Common myeloid progenitor, CD34-positive (primary cell): ENCODE measurements at regions of chr2 and their contacts with region 1.

Region 1: DNA sequence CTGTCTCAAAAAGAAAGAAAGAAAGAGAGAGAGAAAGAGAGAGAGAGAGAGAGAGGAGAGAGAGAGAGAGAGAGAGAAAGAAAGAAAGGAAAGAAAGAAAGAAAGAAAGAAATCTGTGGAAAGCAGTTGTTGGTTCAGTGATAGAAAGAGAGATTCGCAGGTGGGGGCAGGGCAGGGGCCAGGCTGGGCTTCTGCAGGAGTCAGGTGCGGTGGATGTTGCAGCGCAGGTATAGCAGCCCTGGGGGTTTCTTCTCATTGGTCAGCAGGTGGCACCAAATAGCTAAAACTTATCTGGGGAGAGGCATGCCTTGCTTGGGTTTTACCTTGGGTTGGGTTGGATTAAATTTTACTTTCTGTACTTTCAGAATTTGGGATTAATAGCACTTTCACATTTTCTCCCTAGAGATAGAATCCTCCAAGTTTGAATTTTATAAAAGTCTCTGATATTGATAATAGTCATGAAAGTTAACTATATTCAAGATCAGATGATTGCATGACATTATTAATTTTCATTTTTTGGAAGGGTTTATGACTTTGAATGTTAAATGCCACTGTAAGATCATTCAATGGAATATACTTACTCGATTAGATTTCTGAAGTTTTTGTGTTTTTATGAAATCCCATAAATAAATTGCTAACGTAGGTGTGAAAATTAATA is 66.6 kb downstream of the SPTBN1 start:
- DNase-seq: peak; percentile 76 to 85 (median 84)
- H3K4me3 ChIP-seq: no peak overlapping the region
- H3K27ac ChIP-seq: no peak overlapping the region
- H3K4me1 ChIP-seq: peaks cover 0 to 15% (median 3%) of the 10 kb centered on the region in 4 experiments
- H3K27me3 ChIP-seq: no peaks in the 10 kb centered on the region

Region 2: GRCh38 chr2:54106631-54107454 is 415.9 kb before region 1 on chr2:
- CTCF ChIA-PET with region 1: interaction called, 12 read pairs
- POLR2A ChIA-PET with region 1: no interaction called
- DNase-seq: peak; percentile 69 to 83 (median 78)
- H3K4me3 ChIP-seq: peak overlapping the region in 1 of 7 experiments; percentile 53
- H3K27ac ChIP-seq: no peak overlapping the region
- H3K4me1 ChIP-seq: peaks cover 2 to 9% (median 7%) of the 10 kb centered on the region in 4 experiments
- H3K27me3 ChIP-seq: no peaks in the 10 kb centered on the region

Region 3: GRCh38 chr2:54387059-54387991 is 135.4 kb before region 1 on chr2:
- CTCF ChIA-PET with region 1: no interaction called
- POLR2A ChIA-PET with region 1: no interaction called
- DNase-seq: no peak
- H3K4me3 ChIP-seq: no peak overlapping the region
- H3K27ac ChIP-seq: no peak overlapping the region
- H3K4me1 ChIP-seq: peaks cover 0 to 3% (median 0%) of the 10 kb centered on the region in 4 experiments
- H3K27me3 ChIP-seq: peaks cover 0 to 3% (median 0%) of the 10 kb centered on the region in 5 experiments

Region 4: GRCh38 chr2:54558188-54559005 is 35.6 kb after region 1 on chr2:
- CTCF ChIA-PET with region 1: interaction called, 33 read pairs
- POLR2A ChIA-PET with region 1: no interaction called
- DNase-seq: peak; percentile 81 to 95 (median 92)
- H3K4me3 ChIP-seq: peak overlapping the region; percentile 80 to 100 (median 95)
- H3K27ac ChIP-seq: peak overlapping the region; percentile 81 to 93
- H3K4me1 ChIP-seq: peaks cover 24 to 50% (median 35%) of the 10 kb centered on the region in 4 experiments
- H3K27me3 ChIP-seq: no peaks in the 10 kb centered on the region

Region 5: DNA sequence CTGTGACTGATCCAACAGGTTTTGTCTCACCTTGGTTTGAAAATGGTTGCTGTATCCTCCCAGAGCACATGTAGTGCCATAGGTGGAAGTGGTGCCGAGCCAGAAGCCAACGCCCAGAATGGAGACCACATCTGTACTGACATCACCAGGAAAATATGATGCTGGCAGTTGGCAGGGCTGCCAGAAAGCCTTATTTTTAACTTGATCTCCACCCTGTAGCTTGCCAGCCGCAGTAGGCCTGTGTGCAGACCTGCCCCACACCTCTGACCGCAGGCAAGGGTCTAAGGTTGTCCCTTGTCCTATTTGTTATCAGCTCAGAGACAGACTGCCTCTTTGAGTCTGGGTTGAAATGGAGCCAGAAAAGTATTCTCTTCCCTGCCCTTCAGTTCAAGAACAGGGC is 77.2 kb after region 1 on chr2:
- CTCF ChIA-PET with region 1: interaction called, 54 read pairs
- POLR2A ChIA-PET with region 1: no interaction called
- DNase-seq: peak; percentile 52 to 84 (median 66)
- H3K4me3 ChIP-seq: no peak overlapping the region
- H3K27ac ChIP-seq: peak overlapping the region in 1 of 2 experiments; percentile 23
- H3K4me1 ChIP-seq: peaks cover 58 to 98% (median 82%) of the 10 kb centered on the region in 4 experiments
- H3K27me3 ChIP-seq: no peaks in the 10 kb centered on the region

Region 6: GRCh38 chr2:54634564-54635511 is 112.1 kb after region 1 on chr2:
- CTCF ChIA-PET with region 1: interaction called, 18 read pairs
- POLR2A ChIA-PET with region 1: interaction called, 8 read pairs
- DNase-seq: no peak
- H3K4me3 ChIP-seq: no peak overlapping the region
- H3K27ac ChIP-seq: no peak overlapping the region
- H3K4me1 ChIP-seq: no peaks in the 10 kb centered on the region
- H3K27me3 ChIP-seq: no peaks in the 10 kb centered on the region

Region 7: DNA sequence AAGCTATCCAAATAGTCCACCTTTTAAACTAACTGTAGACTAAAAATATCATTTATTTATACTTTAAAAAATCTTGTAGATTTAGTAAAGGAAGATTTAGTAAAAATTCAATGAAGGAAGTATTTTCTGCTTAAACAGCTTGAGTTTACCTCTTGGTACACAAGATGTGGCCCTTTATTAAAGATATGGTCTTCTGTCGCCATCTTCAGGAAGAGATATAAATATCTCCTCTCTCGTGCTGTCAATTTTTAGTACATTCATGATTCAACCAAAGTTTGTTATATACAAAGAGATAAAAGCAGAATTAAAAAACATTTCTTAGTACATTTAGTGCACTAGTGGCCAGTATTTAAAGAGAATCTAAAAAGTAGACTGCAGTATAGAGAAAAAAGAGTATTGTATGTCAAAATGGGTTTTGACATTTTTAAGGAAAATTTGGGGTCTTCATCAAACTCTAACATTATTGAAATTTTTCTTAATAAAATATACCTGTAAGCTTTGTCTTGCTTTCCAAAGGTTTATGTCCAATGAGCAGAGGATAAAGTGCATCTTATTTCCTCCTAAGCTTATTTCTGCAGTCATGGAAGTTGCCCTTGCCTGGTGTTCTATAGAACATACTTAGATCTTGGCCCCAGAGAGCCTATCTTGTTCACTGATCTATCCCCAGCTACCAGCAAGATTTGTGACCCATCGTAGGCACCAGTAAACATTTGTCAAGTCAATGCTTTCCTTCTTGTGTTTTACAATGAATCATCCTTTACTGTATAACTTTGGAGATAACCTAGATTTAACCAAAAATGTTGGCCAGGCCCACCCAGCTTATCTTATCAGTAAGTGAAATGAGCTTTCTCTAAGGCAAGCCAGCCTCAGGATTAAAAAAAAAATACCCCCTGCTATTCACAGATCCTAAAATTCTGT is 182.2 kb after region 1 on chr2:
- CTCF ChIA-PET with region 1: interaction called, 12 read pairs
- POLR2A ChIA-PET with region 1: no interaction called
- DNase-seq: peak; percentile 69 to 86 (median 83)
- H3K4me3 ChIP-seq: no peak overlapping the region
- H3K27ac ChIP-seq: no peak overlapping the region
- H3K4me1 ChIP-seq: peaks cover 0 to 14% (median 11%) of the 10 kb centered on the region in 4 experiments
- H3K27me3 ChIP-seq: peaks cover 0 to 11% (median 0%) of the 10 kb centered on the region in 5 experiments

Region 8: GRCh38 chr2:54787755-54788366 is 265.1 kb after region 1 on chr2:
- CTCF ChIA-PET with region 1: no interaction called
- POLR2A ChIA-PET with region 1: no interaction called
- DNase-seq: no peak
- H3K4me3 ChIP-seq: no peak overlapping the region
- H3K27ac ChIP-seq: no peak overlapping the region
- H3K4me1 ChIP-seq: no peaks in the 10 kb centered on the region
- H3K27me3 ChIP-seq: no peaks in the 10 kb centered on the region